Thyroid gland (tissue), 4 donors: ENCODE measurements at regions of chr3 and their contacts with region 1.

Region 1: GRCh38 chr3:155352900-155353490 is 59.5 kb upstream of the STRIT1 start:
- DNase-seq: no peak
- H3K4me3 ChIP-seq: no peak overlapping the region
- H3K27ac ChIP-seq: no peak overlapping the region
- H3K4me1 ChIP-seq: no peaks in the 10 kb centered on the region
- H3K27me3 ChIP-seq: no peaks in the 10 kb centered on the region
- CTCF ChIP-seq: peak in 5 of 6 experiments; percentile 26 to 85 (median 52)
- POLR2A ChIP-seq: no peak

Region 2: DNA sequence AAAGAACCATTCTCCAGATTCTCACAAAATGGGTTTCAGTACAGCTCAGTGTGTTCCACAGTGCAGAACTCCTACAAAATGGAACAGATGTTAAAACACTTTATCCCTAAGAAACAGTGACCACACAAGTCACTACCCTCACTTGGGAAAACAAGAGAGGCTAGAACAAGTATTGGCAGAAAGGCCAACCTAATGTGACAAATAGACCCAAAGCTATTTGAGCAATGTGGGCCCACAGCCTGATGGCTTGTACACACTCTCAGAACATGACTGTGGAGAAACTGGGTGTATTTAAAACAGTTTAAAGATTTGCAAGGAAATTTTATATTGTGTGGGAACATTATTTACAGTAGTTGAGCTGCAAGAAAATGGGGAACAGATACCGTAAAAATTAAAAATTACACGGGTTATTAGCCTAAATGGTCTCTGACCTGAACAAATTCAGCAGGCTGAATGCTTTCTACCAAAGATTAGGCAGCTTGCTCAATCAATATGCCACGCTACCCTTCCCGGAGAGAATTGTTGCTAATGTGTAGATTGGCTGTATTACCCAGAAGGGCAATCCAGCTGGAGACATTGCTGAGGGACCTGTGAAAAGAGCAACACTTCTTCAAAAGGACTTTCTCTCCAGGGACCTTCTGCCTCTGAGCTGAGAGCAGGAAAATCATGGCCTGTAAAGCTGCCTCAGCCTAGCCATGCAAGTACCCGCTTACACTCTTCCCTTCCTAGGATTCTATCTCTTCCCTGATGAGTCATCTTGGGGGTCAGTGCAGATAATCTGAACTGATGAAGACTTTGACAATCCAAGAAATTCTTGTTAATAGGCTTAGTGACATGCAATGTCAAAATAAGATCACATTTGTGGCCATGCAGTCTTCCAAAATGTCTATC is 156.6 kb before region 1 on chr3:
- intact Hi-C with region 1: no loop called
- DNase-seq: no peak
- H3K4me3 ChIP-seq: no peak overlapping the region
- H3K27ac ChIP-seq: no peak overlapping the region
- H3K4me1 ChIP-seq: peaks cover 0 to 16% of the 10 kb centered on the region in 2 donors
- H3K27me3 ChIP-seq: no peaks in the 10 kb centered on the region
- CTCF ChIP-seq: no peak
- POLR2A ChIP-seq: no peak

Region 3: DNA sequence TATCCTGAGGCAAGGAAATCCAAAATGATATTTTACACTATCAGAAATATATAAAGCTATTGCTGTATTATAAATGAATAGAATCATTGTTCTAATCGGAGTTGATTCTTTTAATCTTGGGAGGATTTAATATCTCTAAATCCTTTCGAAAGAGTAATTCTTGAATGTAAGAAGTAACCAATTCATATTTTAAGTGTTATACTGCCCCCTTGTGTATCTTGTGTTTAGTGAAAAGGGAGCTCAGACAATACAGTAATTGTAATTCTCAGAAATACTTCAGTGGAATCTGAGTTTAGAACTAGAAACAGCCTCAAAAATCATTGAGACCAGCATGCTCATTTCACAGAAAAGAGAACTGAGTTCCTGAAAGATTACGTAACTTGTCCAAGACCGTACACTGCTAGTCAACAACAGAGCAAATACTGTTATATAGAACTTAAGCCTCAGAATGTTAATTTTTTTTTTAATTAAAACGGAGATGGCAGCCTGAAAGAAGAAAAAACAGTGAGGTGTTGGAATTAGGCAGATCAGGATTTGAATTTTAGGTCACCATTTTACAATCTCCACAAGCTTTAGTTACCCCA is 349.0 kb after region 1 on chr3:
- intact Hi-C with region 1: loop called (anchors 5 kb)
- DNase-seq: no peak
- H3K4me3 ChIP-seq: no peak overlapping the region
- H3K27ac ChIP-seq: peak overlapping the region; percentile 83 to 97 (median 87)
- H3K4me1 ChIP-seq: peaks cover 20 to 26% of the 10 kb centered on the region in 2 donors
- H3K27me3 ChIP-seq: no peaks in the 10 kb centered on the region
- CTCF ChIP-seq: peak; percentile 24 to 93 (median 61)
- POLR2A ChIP-seq: no peak